BJ (cell line): ENCODE measurements at regions of chr15 and their contacts with region 1.

Region 1: DNA sequence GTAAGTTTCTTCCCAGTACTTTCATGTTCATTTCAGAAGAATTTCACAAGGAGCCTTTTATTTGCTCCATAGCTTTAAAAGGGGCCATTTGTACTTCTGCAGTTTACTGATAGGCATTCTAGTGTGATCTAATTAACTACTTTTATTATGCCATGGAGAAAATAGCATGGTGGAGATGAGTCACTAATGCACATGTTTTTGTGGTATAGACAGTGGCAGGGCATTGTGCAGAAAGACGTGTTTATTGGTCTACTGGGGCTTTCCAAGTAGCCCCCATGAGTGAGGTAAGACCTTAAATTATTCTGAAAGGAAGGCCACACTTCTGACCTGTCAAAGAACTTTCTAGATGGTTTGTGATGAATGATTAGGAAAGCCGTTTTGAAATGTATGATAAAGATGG is 810.0 kb upstream of the NR2F2 start:
- DNase-seq: no peak
- H3K4me3 ChIP-seq: no peak overlapping the region
- H3K27me3 ChIP-seq: no peaks in the 10 kb centered on the region
- CTCF ChIP-seq: no peak

Region 2: DNA sequence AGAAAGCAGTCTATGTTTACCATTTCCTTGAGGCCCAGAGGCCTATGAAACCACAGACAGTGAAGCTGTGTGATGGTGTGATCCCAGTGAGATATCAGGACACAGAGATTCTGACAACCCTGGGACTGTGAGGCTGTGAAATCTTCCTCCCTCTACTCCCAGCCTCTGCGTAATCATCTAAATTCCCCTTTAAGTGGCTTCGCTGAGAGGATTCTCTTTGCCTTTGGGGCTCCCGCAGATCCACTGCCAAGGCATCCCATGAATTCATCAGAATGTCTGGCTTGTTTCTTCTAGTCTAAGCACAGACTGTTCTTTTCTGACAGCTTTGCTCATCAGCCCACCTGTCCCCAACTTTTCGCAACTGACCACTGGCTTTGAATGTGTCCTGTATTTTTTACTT is 91.2 kb before region 1 on chr15:
- CTCF ChIA-PET with region 1: no interaction called
- POLR2A ChIA-PET with region 1: interaction called, 33 read pairs
- DNase-seq: no peak
- H3K4me3 ChIP-seq: no peak overlapping the region
- H3K27me3 ChIP-seq: no peaks in the 10 kb centered on the region
- CTCF ChIP-seq: no peak

Region 3: GRCh38 chr15:95494971-95495541 is 25.5 kb before region 1 on chr15:
- CTCF ChIA-PET with region 1: no interaction called
- POLR2A ChIA-PET with region 1: no interaction called
- DNase-seq: peak; percentile 4
- H3K4me3 ChIP-seq: no peak overlapping the region
- H3K27me3 ChIP-seq: no peaks in the 10 kb centered on the region
- CTCF ChIP-seq: no peak

Region 4: GRCh38 chr15:95590533-95591044 is 70.1 kb after region 1 on chr15:
- CTCF ChIA-PET with region 1: no interaction called
- POLR2A ChIA-PET with region 1: no interaction called
- DNase-seq: no peak
- H3K4me3 ChIP-seq: no peak overlapping the region
- H3K27me3 ChIP-seq: no peaks in the 10 kb centered on the region
- CTCF ChIP-seq: no peak